ENCODE measurements at regions of chr15 and their contacts with region 1.

Region 1: GRCh38 chr15:94119923-94120775 is 111.2 kb upstream of the MCTP2 start:
- DNase-seq: peak; percentile 82
- ATAC-seq: peak; percentile 92
- H3K4me3 ChIP-seq: no peak overlapping the region
- H3K27ac ChIP-seq: no peak overlapping the region
- H3K4me1 ChIP-seq: no peaks in the 10 kb centered on the region
- H3K27me3 ChIP-seq: no peaks in the 10 kb centered on the region
- CTCF ChIP-seq: peak; percentile 99
- POLR2A ChIP-seq: no peak
- RAD21 ChIP-seq: peak; percentile 91

Region 2: GRCh38 chr15:93035953-93036800 is 1084.0 kb before region 1 on chr15:
- CTCF ChIA-PET with region 1: interaction called, 13 read pairs
- POLR2A ChIA-PET with region 1: no interaction called
- dilution Hi-C with region 1: no loop called
- in situ Hi-C with region 1: loop called (anchors 5 kb)
- intact Hi-C with region 1: loop called (anchors 1 kb)
- DNase-seq: peak; percentile 30
- ATAC-seq: peak; percentile 69
- H3K4me3 ChIP-seq: no peak overlapping the region
- H3K27ac ChIP-seq: no peak overlapping the region
- H3K4me1 ChIP-seq: no peaks in the 10 kb centered on the region; the same call in 1 of the 2 replicates
- H3K27me3 ChIP-seq: peaks cover 2% of the 10 kb centered on the region; the same call in 1 of the 2 replicates
- CTCF ChIP-seq: peak; percentile 52
- POLR2A ChIP-seq: no peak
- RAD21 ChIP-seq: peak; percentile 31; the same call in 1 of the 2 replicates

Region 3: DNA sequence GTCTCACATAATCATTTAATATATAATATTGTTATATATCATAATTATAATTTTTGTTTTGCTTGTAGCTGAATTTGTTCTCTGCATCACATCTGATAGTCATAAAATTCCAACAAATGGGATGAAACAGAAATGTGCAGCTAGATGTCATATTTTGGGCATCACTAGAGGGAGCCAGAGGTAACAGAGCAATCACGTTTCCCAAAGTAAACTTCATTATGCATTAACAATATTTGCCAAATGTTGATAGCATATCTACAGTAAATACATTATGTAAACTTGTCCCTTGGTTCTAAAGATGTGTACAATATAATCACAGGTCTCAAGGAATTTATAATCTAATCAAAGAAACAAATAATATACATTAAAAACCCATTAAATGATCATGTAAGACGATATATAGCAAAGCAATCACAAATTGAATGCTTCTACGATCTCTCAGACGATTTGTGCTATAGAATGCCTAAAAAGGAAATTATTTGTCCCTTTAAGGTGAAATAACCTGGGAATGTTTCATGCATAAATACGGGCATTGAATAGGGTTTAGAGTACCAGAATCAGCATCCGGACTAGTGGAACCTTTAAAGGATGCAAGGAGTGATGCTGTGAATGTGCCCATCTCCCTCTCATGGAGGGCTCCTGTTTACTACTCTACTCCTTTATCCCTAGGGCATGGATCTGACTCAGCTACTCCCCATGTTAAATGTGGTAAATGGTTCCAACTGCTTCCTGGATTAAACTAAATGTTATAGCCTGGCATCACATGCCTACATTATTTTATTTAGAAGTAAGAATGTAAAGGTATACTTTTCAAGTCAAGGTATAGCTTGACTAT is 122.8 kb before region 1 on chr15:
- CTCF ChIA-PET with region 1: interaction called, 8 read pairs
- POLR2A ChIA-PET with region 1: no interaction called
- dilution Hi-C with region 1: no loop called
- in situ Hi-C with region 1: loop called (anchors 5 kb)
- intact Hi-C with region 1: loop called (anchors 1 kb)
- DNase-seq: peak; percentile 4
- ATAC-seq: no peak
- H3K4me3 ChIP-seq: no peak overlapping the region
- H3K27ac ChIP-seq: no peak overlapping the region
- H3K4me1 ChIP-seq: no peaks in the 10 kb centered on the region
- H3K27me3 ChIP-seq: no peaks in the 10 kb centered on the region
- CTCF ChIP-seq: peak; percentile 55
- POLR2A ChIP-seq: no peak
- RAD21 ChIP-seq: peak; percentile 52

Region 4: GRCh38 chr15:94083467-94084052 is 36.6 kb before region 1 on chr15:
- CTCF ChIA-PET with region 1: no interaction called
- POLR2A ChIA-PET with region 1: no interaction called
- dilution Hi-C with region 1: no loop called
- in situ Hi-C with region 1: no loop called
- intact Hi-C with region 1: no loop called
- DNase-seq: peak; percentile 38
- ATAC-seq: no peak
- H3K4me3 ChIP-seq: no peak overlapping the region
- H3K27ac ChIP-seq: no peak overlapping the region
- H3K4me1 ChIP-seq: peaks cover 2% of the 10 kb centered on the region; the same call in 1 of the 2 replicates
- H3K27me3 ChIP-seq: no peaks in the 10 kb centered on the region
- CTCF ChIP-seq: no peak
- POLR2A ChIP-seq: no peak
- RAD21 ChIP-seq: no peak